Posterior vena cava (tissue), 2 donors: ENCODE measurements at regions of chr20 and their contacts with region 1.

Region 1: DNA sequence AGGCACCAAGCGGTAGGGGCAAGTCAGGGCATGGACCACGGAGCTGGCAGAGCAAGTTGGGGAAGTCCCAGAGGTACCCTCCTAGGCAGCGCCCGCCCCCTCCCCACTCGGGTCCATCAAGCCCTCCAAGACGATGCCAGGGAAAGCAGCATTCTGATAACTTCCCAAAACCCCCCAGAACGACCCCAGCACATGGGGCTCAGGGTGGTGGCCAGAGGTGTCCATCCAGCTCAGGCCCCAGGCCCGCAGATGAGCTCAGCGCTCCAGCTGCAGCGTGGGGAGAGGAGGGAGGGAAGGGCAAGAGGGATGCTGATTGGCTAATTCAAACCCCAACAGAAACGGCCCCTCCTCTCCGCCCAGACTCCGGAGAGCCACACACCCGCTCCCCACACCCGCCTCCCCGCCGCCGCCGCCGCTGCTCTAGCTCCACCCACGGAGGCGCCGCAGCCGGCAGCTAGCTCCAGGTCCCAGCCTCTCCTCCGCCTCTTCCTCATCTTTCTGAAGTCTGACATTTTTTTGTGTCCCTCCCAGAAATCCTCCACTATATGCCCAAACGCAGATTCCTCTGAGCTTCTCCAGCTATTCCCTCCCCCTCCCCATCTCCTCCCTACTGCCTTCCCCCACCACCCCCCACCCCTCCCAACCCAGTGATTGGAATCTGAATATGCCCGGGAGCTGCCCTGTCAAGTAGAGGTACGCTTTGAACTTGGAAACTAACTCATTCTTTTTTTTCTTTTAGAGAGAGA is 40.3 kb upstream of the TLDC2 start:
- DNase-seq: peak; percentile 98

Region 2: GRCh38 chr20:35353646-35354045 is 1482.0 kb before region 1 on chr20:
- intact Hi-C with region 1: loop called in 1 of 2 experiments (anchors 5 kb)
- DNase-seq: no peak

Region 3: GRCh38 chr20:36854350-36855240 is 19.0 kb after region 1 on chr20:
- intact Hi-C with region 1: loop called in 1 of 2 experiments (anchors 2 kb)
- DNase-seq: no peak

Region 4: DNA sequence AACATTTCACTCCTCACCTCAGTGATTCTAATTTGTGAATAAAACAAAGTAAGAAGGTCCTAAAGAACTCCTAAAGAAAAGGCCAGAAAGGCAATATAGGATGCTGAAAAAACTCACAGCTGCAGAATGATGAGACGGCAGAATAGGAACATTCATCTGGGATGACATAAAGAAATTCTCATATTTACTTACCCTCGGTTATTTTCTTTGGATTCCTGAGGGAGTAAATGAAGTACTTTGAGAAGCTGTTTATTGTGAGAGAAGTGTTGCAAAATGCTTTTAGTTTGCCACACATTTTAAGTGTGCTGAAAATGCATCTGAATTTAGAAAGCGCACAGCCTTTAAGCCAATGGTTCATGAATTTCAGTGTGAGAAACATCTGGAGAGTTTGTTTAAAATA is 295.9 kb after region 1 on chr20:
- intact Hi-C with region 1: no loop called
- DNase-seq: no peak